KBM-7 (cell line): ENCODE measurements at regions of chr10 and their contacts with region 1.

Region 1: GRCh38 chr10:118568327-118568848 is 27.1 kb downstream of the PRLHR start:
- DNase-seq: peak; percentile 72

Region 2: DNA sequence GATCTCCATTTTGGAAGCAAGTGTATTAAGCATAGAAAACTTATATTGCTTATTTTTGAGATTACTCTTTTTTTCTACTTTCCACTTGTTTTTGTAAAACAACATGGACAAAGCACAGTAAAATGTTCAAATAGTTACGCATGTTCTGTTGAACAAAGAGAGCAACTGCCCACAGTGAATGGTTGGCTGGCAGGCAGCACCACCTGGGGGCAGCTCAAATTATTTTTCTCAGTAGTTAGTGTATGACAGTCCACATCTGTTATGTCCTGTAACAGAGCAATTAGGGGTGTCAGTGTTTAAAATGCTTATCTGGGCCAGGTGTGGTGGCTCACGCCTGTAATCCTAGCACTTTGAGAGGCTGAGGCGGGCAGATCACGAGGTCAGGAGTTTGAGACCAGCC is 232.5 kb after region 1 on chr10:
- in situ Hi-C with region 1: loop called (anchors 25 kb)
- DNase-seq: peak; percentile 32